Cardiac septum (tissue), 1 donor: ENCODE measurements at regions of chr15 and their contacts with region 1.

Region 1: GRCh38 chr15:44219073-44219472 is 24.0 kb upstream of the FRMD5 start:
- DNase-seq: no peak

Region 2: GRCh38 chr15:43903864-43904290 is 315.2 kb before region 1 on chr15:
- intact Hi-C with region 1: loop called (anchors 2 kb)
- DNase-seq: no peak

Region 3: GRCh38 chr15:44087572-44088465 is 131.3 kb before region 1 on chr15:
- intact Hi-C with region 1: no loop called
- DNase-seq: no peak